ENCODE measurements at regions of chrX and their contacts with region 1.

Region 1: DNA sequence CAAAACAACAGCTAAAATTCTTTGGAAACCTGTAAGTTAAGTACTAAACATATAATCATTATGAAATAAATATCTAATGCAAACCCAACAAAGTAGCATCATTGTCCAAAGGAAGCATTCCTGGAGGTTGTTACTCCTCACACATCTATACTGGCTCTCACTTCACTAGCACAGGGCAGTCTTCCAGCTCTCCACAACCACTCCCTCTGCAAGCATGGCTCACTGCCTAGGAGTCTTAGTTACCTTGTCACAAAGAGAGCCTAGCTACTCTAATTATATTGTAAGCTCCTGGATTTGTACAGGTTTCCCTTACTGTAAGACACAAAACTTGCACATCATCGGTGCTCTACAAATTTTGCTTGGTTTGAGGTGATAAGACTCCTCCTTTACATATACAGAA is 76.1 kb downstream of the AMMECR1 start:
- DNase-seq: no peak
- ATAC-seq: no peak
- H3K4me3 ChIP-seq: no peak overlapping the region
- H3K4me3 Mint-ChIP-seq: no peak overlapping the region
- H3K27ac ChIP-seq: no peak overlapping the region
- H3K27ac Mint-ChIP-seq: peak overlapping the region in 1 of 2 donors; percentile 20
- H3K4me1 ChIP-seq: peaks cover 5% of the 10 kb centered on the region
- H3K4me1 Mint-ChIP-seq: peaks cover 23 to 62% of the 10 kb centered on the region in 2 donors
- H3K27me3 ChIP-seq: no peaks in the 10 kb centered on the region
- H3K27me3 Mint-ChIP-seq: no peaks in the 10 kb centered on the region
- CTCF ChIP-seq: no peak

Region 2: GRCh38 chrX:109818976-109819375 is 422.8 kb before region 1 on chrX:
- intact Hi-C with region 1: no loop called
- DNase-seq: no peak
- ATAC-seq: no peak
- H3K4me3 ChIP-seq: no peak overlapping the region
- H3K4me3 Mint-ChIP-seq: no peak overlapping the region
- H3K27ac ChIP-seq: no peak overlapping the region
- H3K27ac Mint-ChIP-seq: no peak overlapping the region
- H3K4me1 ChIP-seq: no peaks in the 10 kb centered on the region
- H3K4me1 Mint-ChIP-seq: no peaks in the 10 kb centered on the region
- H3K27me3 ChIP-seq: no peaks in the 10 kb centered on the region
- H3K27me3 Mint-ChIP-seq: peaks cover 3 to 24% of the 10 kb centered on the region in 2 donors
- CTCF ChIP-seq: no peak

Region 3: DNA sequence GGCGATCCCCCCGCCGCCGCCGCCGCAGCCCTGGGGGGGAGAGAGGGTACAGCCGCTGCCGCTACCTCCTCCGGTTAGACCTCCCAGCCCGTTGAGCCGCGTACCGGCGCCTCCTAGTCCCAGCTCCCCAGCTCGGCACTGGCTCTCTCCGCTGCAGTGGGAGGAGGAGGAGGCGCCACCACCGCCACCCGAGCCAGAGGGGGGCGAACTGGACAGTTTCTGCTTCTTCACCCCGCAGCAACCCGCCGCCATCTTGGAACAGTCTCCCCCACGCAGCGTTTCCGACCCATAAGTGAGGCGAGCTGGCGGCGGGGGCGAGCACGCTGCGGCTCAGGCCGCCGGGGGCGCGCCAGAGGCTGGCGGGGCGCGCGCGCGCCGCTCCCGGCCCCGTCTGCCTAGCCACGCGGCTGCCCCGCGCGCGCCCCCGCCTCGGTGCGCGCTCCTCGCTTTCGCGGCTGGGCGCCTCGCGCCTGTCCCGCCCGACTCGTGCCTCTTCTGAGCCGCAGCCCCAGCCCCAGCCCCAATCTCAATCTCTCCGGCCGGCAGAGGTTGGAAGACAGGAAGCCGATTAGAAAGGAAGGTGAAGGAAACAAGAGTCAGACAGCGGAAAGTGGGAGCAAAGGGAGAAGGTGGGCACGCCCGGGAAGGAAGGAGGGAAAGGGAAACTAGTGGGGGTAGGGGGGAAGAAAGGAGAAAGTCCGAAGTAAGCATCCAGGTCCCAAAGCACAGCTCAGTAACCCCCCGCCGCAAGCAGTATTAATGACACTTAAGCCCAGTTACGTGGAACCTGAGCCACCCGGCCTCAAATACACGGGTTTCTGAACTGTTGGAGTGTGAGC is 76.2 kb after region 1 on chrX and contains the start of gene AMMECR1:
- intact Hi-C with region 1: loop called (anchors 5 kb)
- DNase-seq: peak; percentile 76 to 91
- ATAC-seq: peak; percentile 86 to 98 (median 87)
- H3K4me3 ChIP-seq: peak within 1 kb of the TSS; percentile 97
- H3K4me3 Mint-ChIP-seq: peak within 1 kb of the TSS; percentile 92
- H3K27ac ChIP-seq: peak within 1 kb of the TSS; percentile 88
- H3K27ac Mint-ChIP-seq: peak within 1 kb of the TSS; percentile 68 to 92
- H3K4me1 ChIP-seq: peaks cover 5% of the 10 kb centered on the region
- H3K4me1 Mint-ChIP-seq: peaks cover 15 to 18% of the 10 kb centered on the region in 2 donors
- H3K27me3 ChIP-seq: no peaks in the 10 kb centered on the region
- H3K27me3 Mint-ChIP-seq: peaks cover under 1 to 2% of the 10 kb centered on the region in 2 donors
- CTCF ChIP-seq: no peak
- total RNA-seq, gene AMMECR1: 10.0 to 16.7 (median 11.5) TPM

Region 4: DNA sequence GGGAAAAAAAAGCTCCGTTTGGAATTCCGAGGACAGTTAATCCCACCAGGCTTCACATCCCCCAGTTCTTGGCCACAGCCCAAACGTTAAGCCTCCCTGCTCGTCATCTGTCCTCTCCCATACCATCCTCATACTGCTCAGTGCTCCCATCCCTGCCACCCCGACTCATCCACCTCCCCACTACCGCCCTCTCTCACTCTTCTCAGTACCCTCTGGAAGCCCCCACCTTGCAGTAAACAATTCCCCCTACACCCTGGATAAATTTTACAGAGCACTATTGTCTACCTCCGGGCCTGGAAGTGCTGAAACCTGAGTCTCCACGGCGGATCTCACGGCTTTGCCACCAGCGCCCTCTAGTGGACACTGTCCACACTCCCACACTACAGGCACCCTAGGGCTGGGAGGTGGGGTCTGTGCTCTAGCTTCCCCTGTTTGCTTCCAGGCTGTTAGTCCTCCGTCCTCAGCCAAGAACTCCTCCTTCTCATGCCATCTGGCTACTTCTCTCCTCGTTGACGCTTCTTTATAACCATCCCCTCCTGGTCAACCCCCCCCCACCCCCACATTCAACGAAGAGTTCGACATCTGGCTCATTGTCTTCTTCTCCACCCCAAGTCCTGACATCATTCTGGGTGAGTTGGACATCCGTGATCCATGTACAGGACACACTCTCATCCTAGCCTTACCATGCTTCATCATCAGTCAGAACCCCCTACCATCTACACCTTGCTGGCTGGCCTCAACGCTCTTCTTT is 171.3 kb after region 1 on chrX:
- intact Hi-C with region 1: no loop called
- DNase-seq: peak; percentile 45 to 82
- ATAC-seq: peak; percentile 75 to 94 (median 76)
- H3K4me3 ChIP-seq: no peak overlapping the region
- H3K4me3 Mint-ChIP-seq: no peak overlapping the region
- H3K27ac ChIP-seq: no peak overlapping the region
- H3K27ac Mint-ChIP-seq: no peak overlapping the region
- H3K4me1 ChIP-seq: peaks cover 5% of the 10 kb centered on the region
- H3K4me1 Mint-ChIP-seq: peaks cover 0 to 11% of the 10 kb centered on the region in 2 donors
- H3K27me3 ChIP-seq: no peaks in the 10 kb centered on the region
- H3K27me3 Mint-ChIP-seq: peaks cover 3 to 28% of the 10 kb centered on the region in 2 donors
- CTCF ChIP-seq: peak; percentile 60

Region 5: GRCh38 chrX:110584083-110584482 is 342.3 kb after region 1 on chrX:
- intact Hi-C with region 1: no loop called
- DNase-seq: no peak
- ATAC-seq: no peak
- H3K4me3 ChIP-seq: no peak overlapping the region
- H3K4me3 Mint-ChIP-seq: no peak overlapping the region
- H3K27ac ChIP-seq: no peak overlapping the region
- H3K27ac Mint-ChIP-seq: no peak overlapping the region
- H3K4me1 ChIP-seq: no peaks in the 10 kb centered on the region
- H3K4me1 Mint-ChIP-seq: no peaks in the 10 kb centered on the region
- H3K27me3 ChIP-seq: no peaks in the 10 kb centered on the region
- H3K27me3 Mint-ChIP-seq: peaks cover 0 to 2% of the 10 kb centered on the region in 2 donors
- CTCF ChIP-seq: no peak

Measured in natural killer cell (primary cell).